ACHN (cell line): ENCODE measurements at regions of chr15 and their contacts with region 1.

Region 1: DNA sequence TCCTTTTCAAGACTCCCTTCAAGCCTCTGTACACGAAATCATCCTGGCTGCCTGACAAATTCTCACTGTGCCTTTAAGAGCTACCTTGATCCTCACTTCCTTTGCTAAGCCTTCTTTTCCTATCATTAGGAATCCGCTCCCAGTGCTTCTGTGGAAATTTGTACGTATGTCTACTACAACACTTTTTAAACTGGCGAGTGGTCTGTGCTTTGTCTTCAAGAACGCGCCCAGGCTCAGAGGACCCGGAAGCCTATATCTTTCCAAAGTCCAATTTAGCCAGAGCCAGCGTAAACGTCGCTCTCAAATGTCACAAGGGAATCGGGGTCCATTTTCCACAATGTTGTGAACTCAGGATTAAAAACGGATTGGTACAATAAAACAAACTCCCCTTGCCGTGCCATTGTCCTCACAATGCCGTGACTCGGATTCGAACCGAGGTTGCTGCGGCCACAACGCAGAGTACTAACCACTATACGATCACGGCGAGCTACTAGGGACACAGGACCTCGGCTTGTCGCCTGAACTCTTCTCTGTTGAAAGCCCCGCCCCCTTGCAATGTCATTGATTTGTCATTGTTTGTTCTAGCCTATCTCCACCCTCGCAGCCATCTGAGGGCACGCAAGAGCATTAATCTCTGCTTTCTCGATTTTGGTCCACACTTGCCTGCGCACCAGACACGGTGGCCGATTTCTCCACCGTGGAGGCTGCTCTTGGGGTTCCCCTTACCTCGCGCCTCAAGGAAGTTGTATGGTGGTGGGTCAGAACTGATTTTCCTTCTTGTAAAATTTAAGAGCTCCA is 12.4 kb upstream of the SHF start:
- DNase-seq: peak; percentile 87

Region 2: DNA sequence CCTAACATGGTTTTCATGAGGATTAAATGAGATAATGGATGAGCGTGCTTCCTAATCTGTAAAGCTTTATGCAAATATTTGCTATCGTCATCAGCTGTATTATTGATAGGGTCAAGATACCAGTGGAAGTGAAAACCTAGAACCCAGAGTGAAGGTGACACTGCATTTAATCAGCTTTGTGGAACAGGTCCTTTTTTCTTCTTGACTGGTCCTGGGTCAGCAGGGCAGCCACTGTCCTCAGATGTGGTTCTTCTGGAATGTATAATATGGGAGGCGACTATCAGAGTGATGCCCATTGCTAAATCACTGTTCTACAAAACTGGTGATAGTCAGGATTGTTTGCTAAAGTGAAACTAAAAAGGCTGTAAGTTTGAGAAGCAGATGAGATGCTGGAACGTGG is 135.8 kb before region 1 on chr15:
- in situ Hi-C with region 1: no loop called
- DNase-seq: peak; percentile 53

Region 3: DNA sequence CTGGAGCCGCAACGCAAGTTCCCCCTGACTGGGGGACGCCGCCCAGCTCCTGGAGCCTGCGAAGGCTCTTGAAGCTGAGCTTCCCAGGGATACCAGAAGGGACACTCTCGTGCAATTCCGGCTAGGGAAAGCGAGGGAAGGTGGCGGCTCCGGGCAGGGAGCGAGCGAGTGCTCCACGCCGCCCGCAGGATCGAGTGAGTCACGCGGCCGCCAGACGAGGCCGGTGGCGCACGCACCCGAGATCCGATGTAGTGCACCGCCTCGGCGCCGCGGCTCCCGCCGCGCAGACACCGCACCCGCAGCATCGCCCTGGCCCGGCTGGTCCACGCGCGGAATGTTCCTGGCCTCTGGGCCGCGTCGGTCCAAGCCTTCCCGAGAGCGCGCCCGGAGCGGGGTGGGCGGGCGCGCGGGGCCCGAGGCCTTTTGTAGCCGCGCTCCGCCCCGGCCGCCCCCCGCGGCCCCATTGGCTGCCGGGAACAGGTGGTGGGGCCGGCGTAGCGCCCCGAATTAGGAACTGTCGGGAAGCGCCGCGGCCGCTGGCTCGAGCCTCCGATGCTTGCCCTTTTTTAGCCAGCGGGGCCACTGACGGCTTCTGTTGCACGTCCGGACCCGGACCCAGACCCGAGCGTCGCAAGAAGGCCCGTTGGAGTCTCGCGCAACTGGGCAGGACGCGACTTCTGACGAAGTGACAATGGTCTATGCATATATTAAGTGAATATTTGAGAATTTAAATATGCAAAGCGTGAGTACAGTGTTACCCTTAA is 178.1 kb after region 1 on chr15 and contains the start of gene GATM:
- in situ Hi-C with region 1: loop called (anchors 25 kb)
- DNase-seq: peak; percentile 88